ENCODE measurements at regions of chr18 and their contacts with region 1.

Region 1: GRCh38 chr18:60549338-60549960 is 176.9 kb upstream of the MC4R start:
- H3K4me3 Mint-ChIP-seq: no peak overlapping the region
- H3K27ac Mint-ChIP-seq: no peak overlapping the region
- H3K4me1 Mint-ChIP-seq: no peaks in the 10 kb centered on the region
- H3K27me3 Mint-ChIP-seq: no peaks in the 10 kb centered on the region

Region 2: GRCh38 chr18:59697236-59697932 is 852.1 kb before region 1 on chr18 and contains the start of gene CCBE1:
- intact Hi-C with region 1: loop called (anchors 5 kb)
- H3K4me3 Mint-ChIP-seq: peak within 1 kb of the TSS; percentile 46
- H3K27ac Mint-ChIP-seq: no peak within 1 kb of the TSS
- H3K4me1 Mint-ChIP-seq: peaks cover 8% of the 10 kb centered on the region
- H3K27me3 Mint-ChIP-seq: peaks cover 68% of the 10 kb centered on the region

Region 3: GRCh38 chr18:59988098-59988706 is 561.2 kb before region 1 on chr18:
- intact Hi-C with region 1: loop called (anchors 2 kb)
- H3K4me3 Mint-ChIP-seq: no peak overlapping the region
- H3K27ac Mint-ChIP-seq: no peak overlapping the region
- H3K4me1 Mint-ChIP-seq: no peaks in the 10 kb centered on the region
- H3K27me3 Mint-ChIP-seq: peaks cover 18% of the 10 kb centered on the region

Region 4: GRCh38 chr18:61006687-61007224 is 457.3 kb after region 1 on chr18:
- intact Hi-C with region 1: no loop called
- H3K4me3 Mint-ChIP-seq: no peak overlapping the region
- H3K27ac Mint-ChIP-seq: no peak overlapping the region
- H3K4me1 Mint-ChIP-seq: no peaks in the 10 kb centered on the region
- H3K27me3 Mint-ChIP-seq: no peaks in the 10 kb centered on the region